ENCODE measurements at regions of chr2 and their contacts with region 1.

Region 1: GRCh38 chr2:207046724-207047123 is 107.4 kb downstream of the CPO start:
- DNase-seq: peak in 8 of 9 donors; percentile 24 to 69 (median 52)
- ATAC-seq: peak; percentile 79
- H3K4me3 ChIP-seq: no peak overlapping the region
- H3K4me3 Mint-ChIP-seq: peak overlapping the region in 8 of 10 donors; percentile 0 to 66 (median 12)
- H3K27ac ChIP-seq: no peak overlapping the region
- H3K27ac Mint-ChIP-seq: peak overlapping the region; percentile 2 to 78 (median 56)
- H3K4me1 ChIP-seq: peaks cover 0 to 4% of the 10 kb centered on the region in 2 donors
- H3K4me1 Mint-ChIP-seq: peaks cover 11 to 14% (median 13%) of the 10 kb centered on the region in 7 donors
- H3K27me3 ChIP-seq: no peaks in the 10 kb centered on the region
- H3K27me3 Mint-ChIP-seq: peaks cover 0 to 16% (median 0%) of the 10 kb centered on the region in 5 donors

Region 2: GRCh38 chr2:207248702-207249377 is 202.1 kb after region 1 on chr2:
- CTCF ChIA-PET with region 1: interaction called, 3 read pairs
- POLR2A ChIA-PET with region 1: no interaction called
- intact Hi-C with region 1: loop called in 1 of 2 experiments (anchors 5 kb)
- DNase-seq: no peak
- ATAC-seq: no peak
- H3K4me3 ChIP-seq: no peak overlapping the region
- H3K4me3 Mint-ChIP-seq: no peak overlapping the region
- H3K27ac ChIP-seq: no peak overlapping the region
- H3K27ac Mint-ChIP-seq: no peak overlapping the region
- H3K4me1 ChIP-seq: no peaks in the 10 kb centered on the region
- H3K4me1 Mint-ChIP-seq: peaks cover 0 to 25% (median 7%) of the 10 kb centered on the region in 7 donors
- H3K27me3 ChIP-seq: no peaks in the 10 kb centered on the region
- H3K27me3 Mint-ChIP-seq: peaks cover 0 to 6% (median 0%) of the 10 kb centered on the region in 5 donors

Region 3: DNA sequence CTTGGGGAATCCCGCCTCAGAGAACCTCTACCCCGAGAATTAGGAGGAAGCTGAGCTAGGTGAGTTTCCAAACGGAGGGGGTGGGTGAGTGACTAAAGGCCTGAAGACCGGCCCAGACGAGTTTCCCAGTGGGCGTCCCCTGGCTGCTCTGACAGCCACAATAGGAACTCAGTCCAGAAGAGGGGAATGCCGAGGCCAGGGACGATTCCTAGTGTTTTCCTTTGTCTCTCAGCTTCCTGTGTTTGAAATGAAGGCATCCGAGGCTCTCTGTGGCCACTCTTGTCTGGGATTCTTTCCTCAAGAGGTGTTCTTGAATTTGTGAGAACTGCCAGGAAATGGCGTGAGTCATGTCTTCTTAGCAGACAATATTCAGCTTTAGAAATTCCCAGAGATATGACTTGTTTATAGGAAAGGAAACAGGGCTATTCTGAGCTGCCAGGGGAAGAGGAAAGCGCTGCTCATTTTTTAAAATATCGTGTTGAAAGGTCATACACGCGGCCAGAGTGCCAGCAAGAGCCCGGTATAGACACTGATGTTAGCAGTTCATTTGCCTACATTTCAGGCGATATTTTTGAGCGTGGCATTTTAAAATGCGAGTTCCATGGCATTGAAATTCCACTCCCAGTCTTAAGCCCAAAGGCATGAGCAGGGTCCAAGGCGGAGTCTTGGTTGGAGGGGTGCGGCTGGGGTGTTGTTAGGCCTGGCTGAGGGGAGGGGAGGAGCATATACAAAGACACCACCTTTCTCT is 288.1 kb after region 1 on chr2:
- CTCF ChIA-PET with region 1: no interaction called
- POLR2A ChIA-PET with region 1: no interaction called
- intact Hi-C with region 1: loop called in 1 of 2 experiments (anchors 10 kb)
- DNase-seq: peak in 1 of 9 donors; percentile 57
- ATAC-seq: no peak
- H3K4me3 ChIP-seq: no peak overlapping the region
- H3K4me3 Mint-ChIP-seq: peak overlapping the region in 2 of 10 donors; percentile 20 to 59
- H3K27ac ChIP-seq: no peak overlapping the region
- H3K27ac Mint-ChIP-seq: peak overlapping the region in 1 of 9 donors; percentile 84
- H3K4me1 ChIP-seq: peaks cover 0 to 20% of the 10 kb centered on the region in 2 donors
- H3K4me1 Mint-ChIP-seq: peaks cover 9 to 75% (median 17%) of the 10 kb centered on the region in 7 donors
- H3K27me3 ChIP-seq: no peaks in the 10 kb centered on the region
- H3K27me3 Mint-ChIP-seq: no peaks in the 10 kb centered on the region

Region 4: GRCh38 chr2:207473049-207473930 is 426.6 kb after region 1 on chr2:
- CTCF ChIA-PET with region 1: interaction called, 21 read pairs
- POLR2A ChIA-PET with region 1: interaction called, 3 read pairs
- intact Hi-C with region 1: loop called (anchors 1 kb)
- DNase-seq: peak in 8 of 9 donors; percentile 25 to 68 (median 52)
- ATAC-seq: peak; percentile 76
- H3K4me3 ChIP-seq: no peak overlapping the region
- H3K4me3 Mint-ChIP-seq: peak overlapping the region in 4 of 10 donors; percentile 20 to 52 (median 42)
- H3K27ac ChIP-seq: no peak overlapping the region
- H3K27ac Mint-ChIP-seq: peak overlapping the region in 7 of 9 donors; percentile 14 to 71 (median 48)
- H3K4me1 ChIP-seq: no peaks in the 10 kb centered on the region
- H3K4me1 Mint-ChIP-seq: peaks cover 6 to 23% (median 18%) of the 10 kb centered on the region in 7 donors
- H3K27me3 ChIP-seq: no peaks in the 10 kb centered on the region
- H3K27me3 Mint-ChIP-seq: peaks cover 0 to 4% (median 0%) of the 10 kb centered on the region in 5 donors

Region 5: DNA sequence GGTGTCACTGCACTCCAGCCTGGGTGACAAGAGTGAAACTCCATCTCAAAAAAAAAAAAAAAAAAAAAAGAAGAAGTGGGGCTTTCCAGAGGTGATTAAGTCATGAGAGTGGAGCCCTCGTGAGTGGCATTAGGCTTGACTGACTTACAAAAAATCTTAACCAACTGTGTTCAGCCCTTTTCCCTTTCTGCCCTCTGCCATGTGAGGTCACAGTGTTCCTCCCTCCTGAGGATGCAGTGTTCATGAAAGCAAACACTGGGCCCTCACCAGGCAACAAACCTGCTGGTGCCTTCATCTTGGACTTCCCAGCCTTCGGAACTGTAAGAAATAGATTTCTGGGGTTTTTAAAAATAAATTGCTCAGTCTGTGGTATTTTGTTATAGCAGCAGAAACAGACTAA is 615.5 kb after region 1 on chr2:
- CTCF ChIA-PET with region 1: no interaction called
- POLR2A ChIA-PET with region 1: no interaction called
- intact Hi-C with region 1: no loop called
- DNase-seq: no peak
- ATAC-seq: peak; percentile 93
- H3K4me3 ChIP-seq: no peak overlapping the region
- H3K4me3 Mint-ChIP-seq: no peak overlapping the region
- H3K27ac ChIP-seq: no peak overlapping the region
- H3K27ac Mint-ChIP-seq: no peak overlapping the region
- H3K4me1 ChIP-seq: no peaks in the 10 kb centered on the region
- H3K4me1 Mint-ChIP-seq: no peaks in the 10 kb centered on the region
- H3K27me3 ChIP-seq: no peaks in the 10 kb centered on the region
- H3K27me3 Mint-ChIP-seq: no peaks in the 10 kb centered on the region

Region 6: DNA sequence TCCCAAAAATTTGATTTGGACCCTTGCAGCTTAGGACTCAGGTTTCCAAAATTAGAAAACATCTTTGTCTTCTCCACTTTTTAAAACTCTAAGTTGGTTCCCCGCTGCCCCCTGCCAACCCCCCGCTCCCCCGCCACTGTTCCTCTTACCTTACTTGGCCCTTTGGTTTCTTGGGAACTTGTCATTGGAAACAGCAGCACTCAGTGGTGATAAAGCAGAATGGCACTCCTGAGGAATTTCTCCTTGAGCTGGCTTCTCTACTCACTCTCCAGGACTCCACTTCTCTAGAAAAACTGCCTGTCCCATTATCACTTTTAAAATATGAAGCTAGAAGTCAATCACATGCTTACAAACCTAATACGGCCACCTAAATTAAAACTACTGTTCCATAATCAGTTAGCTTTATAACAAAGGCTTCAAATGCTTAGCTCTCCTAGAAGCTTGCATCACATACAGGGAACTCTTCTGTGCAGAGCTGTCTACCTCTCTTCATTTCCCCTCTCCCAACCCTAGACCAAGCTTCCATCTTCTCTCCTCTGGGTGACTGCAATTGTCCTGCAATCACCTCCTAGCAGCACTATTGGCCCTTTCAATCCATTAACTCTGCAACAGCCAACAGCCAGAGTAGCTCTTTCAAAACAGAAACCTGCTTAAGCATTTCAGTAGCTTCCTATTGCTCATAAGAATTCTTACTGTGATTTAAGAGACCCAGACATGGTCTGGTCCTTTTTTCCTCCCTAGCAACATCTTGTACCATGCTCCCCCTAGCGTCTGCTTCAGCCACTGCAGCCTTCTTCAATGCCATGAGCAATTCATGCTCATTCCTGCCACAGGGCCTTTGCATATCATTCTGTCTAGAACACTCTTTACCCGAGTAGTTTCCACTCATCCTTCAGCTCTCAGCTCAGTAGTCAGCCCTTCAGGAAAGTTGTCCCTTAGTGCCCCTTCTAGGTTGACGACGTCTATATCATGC is 993.8 kb after region 1 on chr2:
- CTCF ChIA-PET with region 1: no interaction called
- POLR2A ChIA-PET with region 1: no interaction called
- intact Hi-C with region 1: loop called in 1 of 2 experiments (anchors 10 kb)
- DNase-seq: peak; percentile 21 to 67 (median 54)
- ATAC-seq: peak; percentile 77
- H3K4me3 ChIP-seq: no peak overlapping the region
- H3K4me3 Mint-ChIP-seq: no peak overlapping the region
- H3K27ac ChIP-seq: no peak overlapping the region
- H3K27ac Mint-ChIP-seq: peak overlapping the region in 1 of 9 donors; percentile 25
- H3K4me1 ChIP-seq: no peaks in the 10 kb centered on the region
- H3K4me1 Mint-ChIP-seq: no peaks in the 10 kb centered on the region
- H3K27me3 ChIP-seq: no peaks in the 10 kb centered on the region
- H3K27me3 Mint-ChIP-seq: peaks cover 0 to 10% (median 5%) of the 10 kb centered on the region in 5 donors

Measured in naive thymus-derived CD4-positive, alpha-beta T cell (primary cell).